Naive thymus-derived CD8-positive, alpha-beta T cell (primary cell): ENCODE measurements at regions of chr4 and their contacts with region 1.

Region 1: GRCh38 chr4:39083164-39083563 is 21.1 kb downstream of the KLHL5 start:
- DNase-seq: no peak
- ATAC-seq: no peak
- H3K4me3 Mint-ChIP-seq: no peak overlapping the region
- H3K27ac Mint-ChIP-seq: no peak overlapping the region
- H3K4me1 Mint-ChIP-seq: peaks cover 0 to 3% (median 0%) of the 10 kb centered on the region in 4 donors
- H3K27me3 Mint-ChIP-seq: no peaks in the 10 kb centered on the region

Region 2: GRCh38 chr4:38867478-38868058 is 215.6 kb before region 1 on chr4 and contains the start of gene FAM114A1:
- POLR2A ChIA-PET with region 1: interaction called, 11 read pairs
- DNase-seq: peak in 3 of 10 donors; percentile 8 to 26 (median 19)
- ATAC-seq: peak; percentile 61 to 87
- H3K4me3 Mint-ChIP-seq: peak within 1 kb of the TSS; percentile 65 to 86 (median 78)
- H3K27ac Mint-ChIP-seq: peak within 1 kb of the TSS in 4 of 10 donors; percentile 39 to 61 (median 53)
- H3K4me1 Mint-ChIP-seq: peaks cover 6 to 20% (median 11%) of the 10 kb centered on the region in 4 donors
- H3K27me3 Mint-ChIP-seq: peaks cover 10 to 25% (median 23%) of the 10 kb centered on the region in 5 donors
- polyA plus RNA-seq, gene FAM114A1: not detected

Region 3: GRCh38 chr4:39062094-39062769 is 20.9 kb before region 1 on chr4 and contains the start of gene KLHL5:
- POLR2A ChIA-PET with region 1: no interaction called
- DNase-seq: no peak
- ATAC-seq: no peak
- H3K4me3 Mint-ChIP-seq: no peak within 1 kb of the TSS
- H3K27ac Mint-ChIP-seq: peak within 1 kb of the TSS in 1 of 10 donors; percentile 1
- H3K4me1 Mint-ChIP-seq: peaks cover 9 to 32% (median 18%) of the 10 kb centered on the region in 4 donors
- H3K27me3 Mint-ChIP-seq: no peaks in the 10 kb centered on the region
- polyA plus RNA-seq, gene KLHL5: 3.9 to 5.6 (median 4.7) TPM

Region 4: GRCh38 chr4:39134683-39135319 is 51.6 kb after region 1 on chr4:
- POLR2A ChIA-PET with region 1: no interaction called
- DNase-seq: no peak
- ATAC-seq: no peak
- H3K4me3 Mint-ChIP-seq: no peak overlapping the region
- H3K27ac Mint-ChIP-seq: peak overlapping the region in 1 of 10 donors; percentile 4
- H3K4me1 Mint-ChIP-seq: peaks cover 3 to 9% (median 7%) of the 10 kb centered on the region in 4 donors
- H3K27me3 Mint-ChIP-seq: no peaks in the 10 kb centered on the region